ENCODE measurements at regions of chr16 and their contacts with region 1.

Region 1: GRCh38 chr16:24367186-24367710 is 111.1 kb downstream of the CACNG3 start:
- DNase-seq: no peak
- ATAC-seq: no peak
- H3K4me3 ChIP-seq: no peak overlapping the region
- H3K27ac ChIP-seq: no peak overlapping the region
- H3K4me1 ChIP-seq: no peaks in the 10 kb centered on the region
- H3K27me3 ChIP-seq: peaks cover 0 to 14% (median 2%) of the 10 kb centered on the region in 7 donors
- CTCF ChIP-seq: no peak

Region 2: DNA sequence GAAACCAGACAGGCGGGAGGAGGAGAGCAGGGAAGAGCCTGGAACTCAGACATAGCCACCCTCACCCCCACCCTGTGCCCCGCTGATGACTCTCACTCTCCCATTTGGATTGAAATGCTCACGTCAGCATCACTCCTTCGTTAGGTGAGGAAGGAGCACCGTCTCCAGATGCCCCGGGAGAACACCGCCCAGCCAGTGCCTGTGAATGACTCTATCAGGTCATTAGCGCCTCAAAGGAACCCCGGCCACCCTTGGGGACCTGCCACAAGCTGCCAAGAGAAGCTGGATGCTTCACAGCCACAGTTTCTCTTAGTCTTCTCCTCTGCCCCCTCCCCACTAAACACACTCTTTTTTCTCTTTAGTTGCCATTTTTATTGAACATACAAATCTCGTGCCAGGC is 45.1 kb before region 1 on chr16:
- intact Hi-C with region 1: loop called in 1 of 10 experiments (anchors 1 kb)
- DNase-seq: no peak
- ATAC-seq: no peak
- H3K4me3 ChIP-seq: no peak overlapping the region
- H3K27ac ChIP-seq: no peak overlapping the region
- H3K4me1 ChIP-seq: no peaks in the 10 kb centered on the region
- H3K27me3 ChIP-seq: peaks cover 0 to 30% (median 25%) of the 10 kb centered on the region in 7 donors
- CTCF ChIP-seq: no peak

Measured in heart right ventricle (tissue), 16 donors.